Lower leg skin (tissue), 4 donors: ENCODE measurements at regions of chr1 and their contacts with region 1.

Region 1: GRCh38 chr1:119948342-119949214 is 52.3 kb upstream of the ADAM30 start:
- DNase-seq: peak; percentile 70 to 94
- H3K4me3 ChIP-seq: no peak overlapping the region
- CTCF ChIP-seq: peak in 1 of 3 donors; percentile 61
- POLR2A ChIP-seq: no peak

Region 2: DNA sequence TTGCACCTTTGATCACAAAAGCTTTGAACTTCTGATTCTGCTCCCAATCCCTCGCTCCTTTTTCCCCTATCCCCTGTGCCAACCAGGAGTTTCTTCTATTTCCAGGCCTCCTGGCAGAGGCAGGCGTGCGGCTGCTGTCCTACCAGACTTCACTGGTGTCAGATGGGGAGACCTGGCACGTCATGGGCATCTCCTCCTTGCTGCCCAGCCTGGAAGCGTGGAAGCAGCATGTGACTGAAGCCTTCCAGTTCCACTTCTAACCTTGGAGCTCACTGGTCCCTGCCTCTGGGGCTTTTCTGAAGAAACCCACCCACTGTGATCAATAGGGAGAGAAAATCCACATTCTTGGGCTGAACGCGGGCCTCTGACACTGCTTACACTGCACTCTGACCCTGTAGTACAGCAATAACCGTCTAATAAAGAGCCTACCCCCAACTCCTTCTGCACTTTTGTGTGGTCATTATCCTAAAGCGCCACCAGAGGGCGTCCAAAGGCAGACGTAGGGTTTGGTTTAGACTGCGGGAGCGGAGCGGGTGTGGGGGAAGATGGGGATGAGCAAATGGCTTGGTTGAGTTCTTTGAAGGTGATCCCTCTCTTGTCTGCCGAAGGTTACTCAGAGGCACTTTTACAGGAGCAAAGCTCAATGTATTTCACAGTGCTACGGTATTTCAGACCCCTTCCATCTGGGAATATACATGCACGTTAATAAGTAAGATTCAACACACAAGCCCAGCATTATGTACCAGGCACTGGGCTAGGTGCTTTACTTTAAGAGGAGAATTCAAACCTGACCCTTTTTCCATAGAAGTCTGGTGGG is 204.6 kb before region 1 on chr1:
- intact Hi-C with region 1: loop called (anchors 10 kb)
- DNase-seq: peak in 1 of 2 donors; percentile 44
- H3K4me3 ChIP-seq: no peak overlapping the region
- CTCF ChIP-seq: peak in 1 of 3 donors; percentile 68
- POLR2A ChIP-seq: no peak

Region 3: GRCh38 chr1:119771016-119771415 is 177.6 kb before region 1 on chr1:
- intact Hi-C with region 1: no loop called
- DNase-seq: no peak
- H3K4me3 ChIP-seq: no peak overlapping the region
- CTCF ChIP-seq: no peak
- POLR2A ChIP-seq: no peak